GM12878 (cell line): ENCODE measurements at regions of chr12 and their contacts with region 1.

Region 1: GRCh38 chr12:92561543-92561899 is 141.3 kb upstream of the PLEKHG7 start:
- DNase-seq: no peak
- ATAC-seq: peak; percentile 13
- H3K4me3 ChIP-seq: peak overlapping the region; percentile 50; the same call in 1 of the 2 replicates
- H3K27ac ChIP-seq: peak overlapping the region; percentile 36
- H3K4me1 ChIP-seq: peaks cover 32% of the 10 kb centered on the region
- H3K27me3 ChIP-seq: no peaks in the 10 kb centered on the region
- CTCF ChIP-seq: no peak
- EP300 ChIP-seq: peak in 1 of 2 experiments; percentile 35; a peak in 1 of 4 replicates
- POLR2A ChIP-seq: no peak
- RAD21 ChIP-seq: no peak

Region 2: DNA sequence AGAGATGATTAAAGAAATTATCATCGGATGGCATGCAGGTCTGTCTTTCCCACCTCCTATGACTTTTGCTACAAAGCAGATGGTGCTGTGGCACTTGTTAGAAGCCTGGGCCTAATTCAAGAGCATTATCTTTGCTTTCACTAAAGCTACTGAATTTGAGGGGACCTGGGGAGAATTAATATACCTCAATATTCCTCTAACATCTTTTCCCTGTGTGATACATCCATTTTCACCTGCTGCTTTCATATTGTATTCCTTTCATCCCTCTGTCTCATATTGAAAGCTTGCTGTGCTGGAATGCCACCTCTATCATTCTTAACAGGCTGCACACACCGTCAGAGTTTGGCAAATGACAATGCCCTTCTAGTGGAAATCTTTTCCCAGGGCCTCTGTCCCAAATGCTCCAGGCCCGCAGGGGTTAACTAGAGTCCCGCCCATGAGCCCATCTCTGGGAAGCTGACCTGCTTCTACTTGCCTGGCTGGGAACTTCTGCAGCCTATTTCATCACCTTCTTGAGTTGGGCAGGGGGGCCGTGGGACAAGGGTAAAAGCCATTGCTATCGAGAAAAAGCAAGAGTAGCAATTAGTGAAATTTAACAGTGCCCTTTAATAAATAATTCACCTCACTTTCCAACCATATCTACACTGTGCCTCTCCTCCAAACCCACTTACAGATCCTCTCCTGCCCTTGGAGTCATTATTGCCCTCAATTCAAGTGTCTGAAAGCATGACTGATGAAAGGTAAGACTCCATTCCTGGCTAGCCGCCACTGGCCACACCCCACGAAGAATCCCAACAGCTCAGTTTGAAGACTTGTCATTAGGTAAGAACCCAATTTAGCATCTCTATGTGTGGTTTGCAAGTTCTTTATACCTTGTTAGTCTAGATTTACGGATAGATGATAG is 289.2 kb before region 1 on chr12:
- CTCF ChIA-PET with region 1: no interaction called
- POLR2A ChIA-PET with region 1: no interaction called
- RAD21 ChIA-PET with region 1: no interaction called
- SMC1A ChIA-PET with region 1: no interaction called
- in situ Hi-C with region 1: no loop called
- intact Hi-C with region 1: no loop called
- DNase-seq: no peak
- ATAC-seq: no peak
- H3K4me3 ChIP-seq: no peak overlapping the region
- H3K27ac ChIP-seq: no peak overlapping the region
- H3K4me1 ChIP-seq: no peaks in the 10 kb centered on the region
- H3K27me3 ChIP-seq: no peaks in the 10 kb centered on the region
- CTCF ChIP-seq: no peak
- EP300 ChIP-seq: no peak
- POLR2A ChIP-seq: no peak
- RAD21 ChIP-seq: no peak

Region 3: DNA sequence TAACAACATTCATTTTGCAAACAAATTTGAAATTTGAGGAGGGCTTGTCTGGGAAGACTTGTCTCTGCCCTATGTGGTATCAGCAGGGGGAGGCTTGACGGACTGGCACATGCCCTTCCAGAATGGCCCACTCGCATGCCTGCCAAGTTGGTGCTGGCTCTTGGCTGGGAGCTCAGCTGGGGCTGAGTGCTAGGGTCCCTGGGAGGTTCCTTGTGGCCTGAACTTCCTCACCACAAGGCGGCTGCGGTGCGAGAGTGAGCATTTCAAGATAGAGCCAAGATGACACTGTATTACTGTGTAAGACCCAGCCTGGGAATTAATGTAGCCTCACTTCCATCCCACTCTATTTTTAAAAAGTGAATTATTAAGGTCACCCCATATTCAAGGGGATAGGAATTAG is 130.4 kb before region 1 on chr12:
- CTCF ChIA-PET with region 1: no interaction called
- POLR2A ChIA-PET with region 1: no interaction called
- RAD21 ChIA-PET with region 1: interaction called, 3 read pairs
- SMC1A ChIA-PET with region 1: interaction called, 22 read pairs
- in situ Hi-C with region 1: no loop called
- intact Hi-C with region 1: no loop called
- DNase-seq: no peak
- ATAC-seq: peak; percentile 64
- H3K4me3 ChIP-seq: no peak overlapping the region
- H3K27ac ChIP-seq: peak overlapping the region; percentile 10
- H3K4me1 ChIP-seq: peaks cover 46% of the 10 kb centered on the region
- H3K27me3 ChIP-seq: no peaks in the 10 kb centered on the region
- CTCF ChIP-seq: peak; percentile 6 to 42 (median 40); a peak in 3 of 6 replicates
- EP300 ChIP-seq: no peak
- POLR2A ChIP-seq: no peak
- RAD21 ChIP-seq: peak; percentile 61

Region 4: GRCh38 chr12:92472201-92472600 is 89.3 kb before region 1 on chr12:
- CTCF ChIA-PET with region 1: interaction called, 6 read pairs
- POLR2A ChIA-PET with region 1: interaction called, 10 read pairs
- RAD21 ChIA-PET with region 1: interaction called, 38 read pairs
- SMC1A ChIA-PET with region 1: interaction called, 32 read pairs
- in situ Hi-C with region 1: loop called (anchors 25 kb)
- intact Hi-C with region 1: loop called (anchors 2 kb)
- DNase-seq: no peak
- ATAC-seq: no peak
- H3K4me3 ChIP-seq: no peak overlapping the region
- H3K27ac ChIP-seq: peak overlapping the region; percentile 81
- H3K4me1 ChIP-seq: peaks cover 40% of the 10 kb centered on the region
- H3K27me3 ChIP-seq: no peaks in the 10 kb centered on the region
- CTCF ChIP-seq: no peak
- EP300 ChIP-seq: no peak
- POLR2A ChIP-seq: no peak
- RAD21 ChIP-seq: no peak

Region 5: DNA sequence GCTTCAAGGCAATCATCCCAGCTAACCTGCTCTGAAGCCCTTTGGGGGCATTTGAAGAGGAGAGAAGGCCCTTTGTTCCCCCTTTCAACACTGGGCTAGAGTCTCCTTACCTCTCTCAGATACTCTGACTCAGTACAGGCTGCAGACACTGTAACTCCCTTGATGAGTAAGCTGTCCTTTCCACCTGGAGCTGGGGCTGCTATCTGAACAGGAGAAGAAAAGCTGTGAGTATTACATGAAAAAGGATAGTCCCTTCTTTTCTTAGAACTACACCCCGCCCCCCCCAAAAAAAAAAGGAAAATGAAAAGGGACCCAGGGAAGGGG is 45.3 kb before region 1 on chr12:
- CTCF ChIA-PET with region 1: no interaction called
- POLR2A ChIA-PET with region 1: interaction called, 4 read pairs
- RAD21 ChIA-PET with region 1: interaction called, 4 read pairs
- SMC1A ChIA-PET with region 1: interaction called, 12 read pairs
- in situ Hi-C with region 1: no loop called
- intact Hi-C with region 1: no loop called
- DNase-seq: no peak
- ATAC-seq: peak; percentile 85
- H3K4me3 ChIP-seq: no peak overlapping the region
- H3K27ac ChIP-seq: no peak overlapping the region
- H3K4me1 ChIP-seq: no peaks in the 10 kb centered on the region
- H3K27me3 ChIP-seq: no peaks in the 10 kb centered on the region
- CTCF ChIP-seq: no peak
- EP300 ChIP-seq: no peak
- POLR2A ChIP-seq: no peak
- RAD21 ChIP-seq: no peak